Activated CD4-positive, alpha-beta memory T cell treated with anti-CD3 and anti-CD28 coated beads, Interleukin-2, amount 10 ng/mL, durations not matched to agents 7 days and 5 days (primary cell): ENCODE measurements at regions of chr6 and their contacts with region 1.

Region 1: GRCh38 chr6:42390228-42390934 is 61.3 kb downstream of the TRERF1 start:
- DNase-seq: peak; percentile 62
- H3K4me3 Mint-ChIP-seq: peak overlapping the region; percentile 60
- H3K27ac Mint-ChIP-seq: peak overlapping the region; percentile 93
- H3K4me1 Mint-ChIP-seq: peaks cover 89% of the 10 kb centered on the region
- H3K27me3 Mint-ChIP-seq: no peaks in the 10 kb centered on the region

Region 2: DNA sequence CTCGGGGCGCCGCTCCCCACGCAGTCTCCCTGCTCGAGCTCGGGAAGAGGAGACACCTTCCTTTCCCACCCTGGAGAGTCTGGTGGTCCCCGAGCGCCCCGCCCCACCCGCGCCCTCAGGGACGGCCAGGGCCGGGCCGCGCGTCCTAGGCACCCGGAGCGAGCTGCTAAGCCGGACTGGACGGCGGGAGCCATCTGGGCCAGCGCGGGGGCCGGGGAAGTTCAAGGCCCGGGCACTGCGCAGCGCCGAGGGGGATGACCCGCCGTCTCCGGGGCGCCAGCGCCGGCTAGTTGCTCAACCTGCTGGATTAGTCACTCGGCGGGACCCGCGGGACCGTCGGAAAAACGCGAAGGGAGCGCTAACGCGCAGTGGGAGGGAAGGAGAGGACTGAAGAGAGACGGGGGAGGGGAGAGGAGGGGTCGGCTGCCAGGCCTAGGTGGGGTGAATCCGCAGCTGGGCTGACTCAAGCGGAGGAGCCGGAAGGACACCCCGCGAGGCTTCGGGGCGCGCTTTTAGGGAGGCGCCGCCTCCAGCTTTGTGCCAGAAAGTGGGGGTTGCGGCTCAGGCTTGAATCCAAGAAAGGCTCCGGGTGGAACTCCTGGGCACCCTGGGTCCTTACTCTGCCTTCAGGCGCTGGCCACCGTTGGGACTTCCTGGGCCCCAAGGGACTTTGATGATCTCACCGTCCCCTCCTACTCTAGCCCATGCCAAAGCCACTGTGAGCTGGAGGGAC is 919.9 kb before region 1 on chr6:
- CTCF ChIA-PET with region 1: no interaction called
- POLR2A ChIA-PET with region 1: no interaction called
- DNase-seq: no peak
- H3K4me3 Mint-ChIP-seq: no peak overlapping the region
- H3K27ac Mint-ChIP-seq: no peak overlapping the region
- H3K4me1 Mint-ChIP-seq: peaks cover 5% of the 10 kb centered on the region
- H3K27me3 Mint-ChIP-seq: peaks cover 72% of the 10 kb centered on the region

Region 3: GRCh38 chr6:42158011-42158410 is 232.4 kb before region 1 on chr6:
- CTCF ChIA-PET with region 1: no interaction called
- POLR2A ChIA-PET with region 1: no interaction called
- DNase-seq: no peak
- H3K4me3 Mint-ChIP-seq: no peak overlapping the region
- H3K27ac Mint-ChIP-seq: no peak overlapping the region
- H3K4me1 Mint-ChIP-seq: no peaks in the 10 kb centered on the region
- H3K27me3 Mint-ChIP-seq: peaks cover 14% of the 10 kb centered on the region

Region 4: GRCh38 chr6:42338663-42339218 is 51.6 kb before region 1 on chr6:
- CTCF ChIA-PET with region 1: no interaction called
- POLR2A ChIA-PET with region 1: interaction called, 16 read pairs
- DNase-seq: no peak
- H3K4me3 Mint-ChIP-seq: no peak overlapping the region
- H3K27ac Mint-ChIP-seq: peak overlapping the region; percentile 21
- H3K4me1 Mint-ChIP-seq: peaks cover 71% of the 10 kb centered on the region
- H3K27me3 Mint-ChIP-seq: no peaks in the 10 kb centered on the region

Region 5: DNA sequence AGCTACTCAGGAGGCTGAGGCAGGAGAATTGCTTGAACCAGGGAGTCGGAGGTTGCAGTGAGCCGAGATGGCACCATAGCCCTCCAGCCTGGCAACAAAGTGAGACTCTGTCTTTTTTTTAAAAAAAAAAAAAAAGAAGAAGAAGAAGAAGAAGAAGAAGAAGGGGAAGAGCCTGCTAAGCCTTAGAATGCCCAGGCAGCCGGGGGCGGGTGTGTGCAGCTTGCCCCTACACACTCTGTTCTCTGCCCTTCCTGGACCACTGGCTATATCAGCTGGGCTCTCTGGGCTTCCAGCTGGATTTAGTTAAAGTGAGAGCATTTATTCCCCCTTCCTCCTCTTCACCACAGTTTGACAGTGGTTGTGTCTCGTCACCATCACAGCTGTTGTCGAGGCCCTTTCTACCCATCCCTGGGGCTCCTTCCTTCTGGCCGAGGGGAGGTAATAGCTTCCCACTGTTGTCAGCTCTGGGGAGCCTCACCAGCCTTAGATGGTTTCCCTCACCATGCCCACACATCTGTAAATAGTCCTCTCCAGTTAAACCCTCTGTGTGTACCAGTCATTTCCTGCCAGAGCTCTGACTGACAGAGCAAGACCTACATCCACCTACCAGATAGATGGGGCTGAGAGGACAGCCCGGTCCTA is 16.2 kb before region 1 on chr6:
- CTCF ChIA-PET with region 1: interaction called, 10 read pairs
- POLR2A ChIA-PET with region 1: interaction called, 67 read pairs
- DNase-seq: no peak
- H3K4me3 Mint-ChIP-seq: no peak overlapping the region
- H3K27ac Mint-ChIP-seq: peak overlapping the region; percentile 52
- H3K4me1 Mint-ChIP-seq: peaks cover 61% of the 10 kb centered on the region
- H3K27me3 Mint-ChIP-seq: no peaks in the 10 kb centered on the region

Region 6: DNA sequence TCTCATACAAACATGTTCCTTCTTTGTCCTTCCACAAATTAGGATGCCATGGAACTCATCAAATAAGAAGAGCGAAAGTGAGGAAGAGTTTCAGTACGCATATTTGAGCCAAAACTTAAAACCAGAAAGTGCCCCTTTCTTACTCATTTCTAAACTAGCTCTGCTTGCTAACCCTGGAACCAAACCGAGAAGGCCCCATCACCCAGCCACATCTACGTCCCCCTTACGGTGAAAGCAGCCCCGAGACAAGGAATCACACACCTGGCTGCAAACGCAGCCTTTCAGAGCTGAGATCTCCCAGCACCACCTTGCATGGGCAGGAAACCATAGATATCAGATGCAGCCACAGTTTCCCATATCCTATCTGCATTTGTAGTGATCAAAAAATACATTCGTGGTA is 32.9 kb after region 1 on chr6:
- CTCF ChIA-PET with region 1: interaction called, 12 read pairs
- POLR2A ChIA-PET with region 1: interaction called, 12 read pairs
- DNase-seq: peak; percentile 47
- H3K4me3 Mint-ChIP-seq: peak overlapping the region; percentile 43
- H3K27ac Mint-ChIP-seq: peak overlapping the region; percentile 50
- H3K4me1 Mint-ChIP-seq: peaks cover 58% of the 10 kb centered on the region
- H3K27me3 Mint-ChIP-seq: peaks cover 2% of the 10 kb centered on the region

Region 7: GRCh38 chr6:42440778-42441696 is 50.7 kb after region 1 on chr6:
- CTCF ChIA-PET with region 1: no interaction called
- POLR2A ChIA-PET with region 1: interaction called, 16 read pairs
- DNase-seq: no peak
- H3K4me3 Mint-ChIP-seq: peak overlapping the region; percentile 54
- H3K27ac Mint-ChIP-seq: peak overlapping the region; percentile 58
- H3K4me1 Mint-ChIP-seq: peaks cover 58% of the 10 kb centered on the region
- H3K27me3 Mint-ChIP-seq: no peaks in the 10 kb centered on the region

Region 8: DNA sequence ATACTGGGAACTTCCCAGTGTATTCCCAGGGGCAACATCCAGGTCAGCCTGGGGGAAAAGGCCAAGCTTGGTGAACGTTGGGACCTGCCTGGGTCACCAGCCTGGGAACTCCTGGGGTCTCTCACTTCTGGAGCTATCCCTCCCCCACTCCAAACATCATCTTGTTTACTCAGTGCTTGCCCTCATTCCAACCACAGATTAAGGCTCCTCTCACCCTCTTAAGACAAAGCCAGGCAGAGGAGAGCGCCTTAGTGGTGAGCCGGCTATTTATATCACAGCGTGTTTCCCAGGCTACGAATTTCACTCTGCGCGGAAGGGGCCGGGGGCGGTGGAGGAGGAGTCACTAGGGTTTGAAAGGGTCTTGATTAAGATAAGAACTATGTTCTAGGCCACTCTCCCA is 319.9 kb after region 1 on chr6:
- CTCF ChIA-PET with region 1: no interaction called
- POLR2A ChIA-PET with region 1: no interaction called
- DNase-seq: no peak
- H3K4me3 Mint-ChIP-seq: no peak overlapping the region
- H3K27ac Mint-ChIP-seq: no peak overlapping the region
- H3K4me1 Mint-ChIP-seq: peaks cover 6% of the 10 kb centered on the region
- H3K27me3 Mint-ChIP-seq: no peaks in the 10 kb centered on the region